Activated CD4-positive, alpha-beta T cell treated with anti-CD3 and anti-CD28 coated beads, Interleukin-2, amount 10 ng/mL, durations not matched to agents 24 days and 14 days (primary cell): ENCODE measurements at regions of chr3 and their contacts with region 1.

Region 1: DNA sequence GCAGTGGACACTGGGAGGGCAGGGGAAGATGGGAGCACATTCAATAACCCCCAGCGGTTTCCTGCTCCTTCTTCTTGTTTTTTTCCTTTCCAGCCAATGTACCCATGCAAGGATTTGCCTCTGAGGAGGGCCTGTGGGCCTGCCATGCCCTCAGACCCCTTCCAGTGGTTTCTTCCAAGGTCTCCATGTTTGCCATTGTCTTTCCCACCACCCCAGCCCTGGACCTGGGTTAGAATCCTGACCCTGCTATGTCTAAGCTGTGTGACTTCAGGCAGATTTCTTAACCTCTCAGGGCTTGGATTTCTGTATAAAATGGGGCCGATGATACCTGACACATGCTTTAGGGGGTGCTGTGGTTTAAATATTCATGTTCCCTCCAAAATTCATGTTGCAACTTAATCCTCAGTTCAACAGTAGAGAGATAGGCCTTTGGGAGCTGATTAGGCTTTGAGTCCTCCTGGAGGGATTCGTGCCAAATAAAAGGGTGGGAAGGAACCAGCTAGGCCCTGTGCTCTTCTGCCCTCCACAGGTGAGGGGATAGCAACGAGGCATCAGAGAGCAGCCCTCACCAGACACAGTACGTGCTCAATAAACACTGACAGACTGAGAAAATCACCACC is 46.3 kb upstream of the FLNB start:
- DNase-seq: no peak
- H3K4me3 Mint-ChIP-seq: no peak overlapping the region
- H3K27ac Mint-ChIP-seq: no peak overlapping the region
- H3K4me1 Mint-ChIP-seq: peaks cover 2% of the 10 kb centered on the region
- H3K27me3 Mint-ChIP-seq: no peaks in the 10 kb centered on the region

Region 2: GRCh38 chr3:57918123-57918837 is 43.7 kb before region 1 on chr3:
- intact Hi-C with region 1: no loop called
- DNase-seq: no peak
- H3K4me3 Mint-ChIP-seq: no peak overlapping the region
- H3K27ac Mint-ChIP-seq: no peak overlapping the region
- H3K4me1 Mint-ChIP-seq: no peaks in the 10 kb centered on the region
- H3K27me3 Mint-ChIP-seq: no peaks in the 10 kb centered on the region

Region 3: GRCh38 chr3:58177747-58178527 is 216.0 kb after region 1 on chr3:
- intact Hi-C with region 1: loop called (anchors 5 kb)
- DNase-seq: peak; percentile 97
- H3K4me3 Mint-ChIP-seq: peak overlapping the region; percentile 81
- H3K27ac Mint-ChIP-seq: no peak overlapping the region
- H3K4me1 Mint-ChIP-seq: peaks cover 15% of the 10 kb centered on the region
- H3K27me3 Mint-ChIP-seq: peaks cover 9% of the 10 kb centered on the region